Activated CD4-positive, alpha-beta memory T cell treated with anti-CD3 and anti-CD28 coated beads, Interleukin-2, amount 10 ng/mL, durations not matched to agents 7 days and 5 days (primary cell): ENCODE measurements at regions of chr10 and their contacts with region 1.

Region 1: GRCh38 chr10:43304687-43305340 is 37.9 kb upstream of the RASGEF1A start:
- DNase-seq: peak; percentile 65
- H3K4me3 Mint-ChIP-seq: peak overlapping the region; percentile 65
- H3K27ac Mint-ChIP-seq: peak overlapping the region; percentile 56
- H3K4me1 Mint-ChIP-seq: peaks cover 59% of the 10 kb centered on the region
- H3K27me3 Mint-ChIP-seq: peaks cover 16% of the 10 kb centered on the region

Region 2: DNA sequence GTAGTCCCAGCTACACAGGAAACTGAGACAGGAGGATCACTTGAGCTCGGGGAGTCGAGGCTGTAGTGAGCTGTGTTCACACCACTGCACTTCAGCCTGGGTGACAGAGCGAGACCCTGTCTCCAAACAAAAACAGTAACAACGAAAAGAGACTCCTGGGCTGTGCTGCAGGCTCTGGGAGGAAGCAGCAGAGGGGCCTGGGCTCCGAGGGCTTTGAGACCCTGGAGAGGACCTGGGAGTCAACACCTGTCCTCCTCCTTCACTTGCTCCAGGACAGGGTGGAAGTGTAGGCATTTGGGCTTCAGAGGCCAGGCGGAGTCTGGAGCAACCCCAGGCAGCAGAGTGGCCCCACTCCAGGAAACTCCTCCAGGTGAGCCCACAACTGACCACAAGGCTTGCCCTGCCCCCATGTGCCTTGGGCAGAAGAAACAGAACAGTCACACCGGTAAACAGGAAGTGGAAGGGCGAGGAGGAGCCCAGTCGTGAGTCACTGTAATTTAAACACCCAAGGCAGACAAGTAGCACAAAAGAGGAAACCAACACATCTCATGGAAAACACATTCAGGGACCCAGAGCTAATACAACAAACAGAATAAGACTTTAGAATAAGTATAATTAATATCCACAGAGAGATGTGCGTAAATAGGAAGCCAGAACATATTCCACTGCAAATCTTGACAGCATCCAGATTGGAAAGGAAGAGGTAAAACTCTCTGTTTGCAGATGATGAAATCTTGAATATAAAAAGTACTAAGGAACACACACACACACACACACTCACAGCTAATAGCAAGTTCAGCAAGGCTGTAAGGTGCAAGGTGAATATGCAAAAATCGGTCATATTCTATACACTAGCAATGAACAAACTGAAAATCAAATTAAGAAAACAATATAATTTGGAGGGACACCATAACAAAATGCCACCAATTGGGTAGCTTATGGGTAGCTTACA is 17.5 kb before region 1 on chr10:
- CTCF ChIA-PET with region 1: interaction called, 14 read pairs
- POLR2A ChIA-PET with region 1: interaction called, 28 read pairs
- DNase-seq: peak; percentile 86
- H3K4me3 Mint-ChIP-seq: peak overlapping the region; percentile 26
- H3K27ac Mint-ChIP-seq: peak overlapping the region; percentile 88
- H3K4me1 Mint-ChIP-seq: peaks cover 58% of the 10 kb centered on the region
- H3K27me3 Mint-ChIP-seq: peaks cover 9% of the 10 kb centered on the region